Activated CD4-positive, alpha-beta memory T cell treated with anti-CD3 and anti-CD28 coated beads for 36 hours (primary cell): ENCODE measurements at regions of chr1 and their contacts with region 1.

Region 1: GRCh38 chr1:17125756-17126237 is 6.5 kb upstream of the PADI2 start:
- DNase-seq: peak; percentile 86
- H3K4me3 Mint-ChIP-seq: no peak overlapping the region
- H3K27ac Mint-ChIP-seq: no peak overlapping the region
- H3K4me1 Mint-ChIP-seq: no peaks in the 10 kb centered on the region
- H3K27me3 Mint-ChIP-seq: peaks cover 10% of the 10 kb centered on the region

Region 2: GRCh38 chr1:17244816-17245740 is 119.3 kb after region 1 on chr1:
- CTCF ChIA-PET with region 1: interaction called, 196 read pairs
- POLR2A ChIA-PET with region 1: no interaction called
- intact Hi-C with region 1: no loop called
- DNase-seq: no peak
- H3K4me3 Mint-ChIP-seq: no peak overlapping the region
- H3K27ac Mint-ChIP-seq: no peak overlapping the region
- H3K4me1 Mint-ChIP-seq: no peaks in the 10 kb centered on the region
- H3K27me3 Mint-ChIP-seq: peaks cover 1% of the 10 kb centered on the region

Region 3: DNA sequence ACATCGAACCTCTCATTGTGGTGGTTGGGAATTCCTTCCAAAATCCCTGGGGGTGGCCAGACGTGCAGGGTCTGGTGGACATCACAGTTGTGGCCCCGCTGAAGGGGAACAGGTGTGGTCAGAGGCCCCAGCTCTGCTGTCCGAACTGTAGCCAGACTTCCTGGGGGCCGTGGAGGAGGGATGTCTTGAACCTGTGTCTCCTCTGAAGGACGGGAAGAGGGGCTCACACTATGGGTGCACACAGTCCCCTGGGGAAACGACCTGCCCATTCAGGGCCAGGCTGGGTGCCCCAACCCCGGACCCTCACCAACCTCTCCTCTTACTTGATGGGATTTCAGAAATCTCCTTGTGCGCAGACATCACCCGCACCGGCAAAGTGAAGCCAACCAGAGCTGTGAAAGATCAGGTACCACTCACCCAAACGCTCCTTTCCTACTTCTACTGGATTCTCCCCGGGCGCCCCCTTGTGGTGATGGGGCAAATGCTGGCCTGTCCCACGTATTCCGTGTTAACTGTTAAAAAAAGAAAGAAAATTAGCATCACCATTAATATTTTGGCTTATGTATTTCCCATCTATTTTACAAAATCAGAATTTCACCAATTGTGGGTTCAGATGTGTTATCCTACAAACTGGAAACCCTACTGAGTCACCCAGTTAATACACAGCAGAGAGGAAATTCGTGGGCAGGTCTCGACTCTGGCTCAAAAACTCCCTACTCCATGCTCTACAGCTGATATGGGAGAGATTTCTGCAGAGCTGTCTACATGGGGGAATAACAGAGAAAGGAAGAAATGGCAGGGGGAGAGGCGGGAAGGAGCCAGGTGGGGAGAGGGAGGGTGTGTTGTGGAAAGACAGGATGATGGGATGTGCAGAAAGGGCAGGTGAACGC is 210.3 kb after region 1 on chr1:
- CTCF ChIA-PET with region 1: interaction called, 4 read pairs
- POLR2A ChIA-PET with region 1: no interaction called
- intact Hi-C with region 1: loop called (anchors 2 kb)
- DNase-seq: peak; percentile 76
- H3K4me3 Mint-ChIP-seq: no peak overlapping the region
- H3K27ac Mint-ChIP-seq: no peak overlapping the region
- H3K4me1 Mint-ChIP-seq: no peaks in the 10 kb centered on the region
- H3K27me3 Mint-ChIP-seq: peaks cover 19% of the 10 kb centered on the region